OCI-LY7 (cell line): ENCODE measurements at regions of chr3 and their contacts with region 1.

Region 1: GRCh38 chr3:49158108-49158709 is 7.9 kb downstream of the CCDC71 start:
- DNase-seq: peak; percentile 72
- H3K4me3 ChIP-seq: no peak overlapping the region
- H3K27ac ChIP-seq: no peak overlapping the region
- H3K4me1 ChIP-seq: no peaks in the 10 kb centered on the region
- CTCF ChIP-seq: peak; percentile 83

Region 2: DNA sequence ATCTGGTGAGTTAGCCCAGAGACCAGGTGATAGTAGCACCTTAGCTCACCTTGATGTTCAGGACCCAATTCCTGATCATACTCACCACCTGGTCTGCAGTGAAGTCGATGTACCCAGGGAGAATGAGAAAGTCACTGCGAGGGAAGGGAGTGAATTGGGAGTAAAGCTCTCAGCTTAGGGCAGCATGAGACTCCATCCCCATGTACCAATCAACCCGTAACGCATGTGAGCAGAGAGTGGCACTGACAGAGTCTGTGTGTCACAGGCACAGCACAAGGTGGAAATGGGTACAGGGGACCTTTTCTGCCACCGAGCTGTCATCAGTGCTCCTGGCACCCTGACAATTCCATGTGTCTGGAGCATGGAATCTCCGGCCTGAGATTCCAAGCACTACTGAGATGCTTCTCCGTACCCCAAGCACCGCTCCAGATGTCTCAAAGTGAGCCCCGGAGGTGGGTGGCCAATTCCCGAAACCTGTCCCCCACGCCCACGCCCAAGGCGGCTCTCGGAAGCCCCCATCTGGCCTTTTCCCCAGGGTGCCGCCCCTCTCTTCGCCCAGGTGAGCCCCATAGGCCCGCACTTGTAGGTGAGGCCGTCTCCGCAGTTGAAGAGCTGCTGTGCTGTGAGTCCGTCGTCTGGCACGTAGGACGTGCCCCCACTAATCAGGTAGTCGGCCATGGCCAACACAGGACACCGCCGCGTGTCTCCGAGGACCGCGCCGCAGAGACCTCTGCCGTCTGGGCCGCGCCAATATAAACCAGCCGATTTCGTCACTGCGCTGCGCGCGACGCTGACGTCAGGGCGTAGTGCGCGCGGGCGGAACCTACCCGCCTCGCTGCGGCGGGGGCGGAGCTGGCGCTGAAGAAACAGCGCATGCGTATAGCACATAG is 129.3 kb before region 1 on chr3 and contains the start of gene IMPDH2:
- CTCF ChIA-PET with region 1: no interaction called
- POLR2A ChIA-PET with region 1: no interaction called
- intact Hi-C with region 1: loop called (anchors 5 kb)
- DNase-seq: peak; percentile 97
- H3K4me3 ChIP-seq: peak within 1 kb of the TSS; percentile 80
- H3K27ac ChIP-seq: peak within 1 kb of the TSS; percentile 58
- H3K4me1 ChIP-seq: peaks cover 51% of the 10 kb centered on the region
- CTCF ChIP-seq: peak; percentile 48; the same call in 1 of the 2 replicates
- total RNA-seq, gene IMPDH2: 295 and 319 TPM in 2 replicates